Gastrocnemius medialis (tissue), 4 donors: ENCODE measurements at regions of chr13 and their contacts with region 1.

Region 1: GRCh38 chr13:110715395-110716235 is 2.1 kb downstream of the ING1 start:
- DNase-seq: peak; percentile 99
- ATAC-seq: peak; percentile 65 to 72
- H3K4me3 ChIP-seq: peak overlapping the region; percentile 85 to 98 (median 94)
- H3K27ac ChIP-seq: peak overlapping the region; percentile 97 to 100 (median 100)
- H3K4me1 ChIP-seq: peaks cover 25 to 30% of the 10 kb centered on the region in 2 donors
- H3K27me3 ChIP-seq: no peaks in the 10 kb centered on the region
- CTCF ChIP-seq: peak in 3 of 5 experiments; percentile 5 to 33 (median 30)
- POLR2A ChIP-seq: peak; percentile 76

Region 2: GRCh38 chr13:109918179-109918711 is 797.4 kb before region 1 on chr13:
- in situ Hi-C with region 1: no loop called
- intact Hi-C with region 1: no loop called
- DNase-seq: peak; percentile 84 to 92
- ATAC-seq: peak; percentile 99
- H3K4me3 ChIP-seq: no peak overlapping the region
- H3K27ac ChIP-seq: peak overlapping the region; percentile 73 to 81 (median 77)
- H3K4me1 ChIP-seq: peaks cover 4 to 11% of the 10 kb centered on the region in 2 donors
- H3K27me3 ChIP-seq: no peaks in the 10 kb centered on the region
- CTCF ChIP-seq: peak in 1 of 5 experiments; percentile 14
- POLR2A ChIP-seq: peak in 1 of 2 donors; percentile 21

Region 3: GRCh38 chr13:110138010-110138699 is 577.5 kb before region 1 on chr13:
- in situ Hi-C with region 1: no loop called
- intact Hi-C with region 1: loop called (anchors 2 kb)
- DNase-seq: peak; percentile 72 to 75
- ATAC-seq: peak; percentile 67 to 68
- H3K4me3 ChIP-seq: peak overlapping the region; percentile 53 to 81 (median 60)
- H3K27ac ChIP-seq: peak overlapping the region; percentile 85 to 95 (median 89)
- H3K4me1 ChIP-seq: peaks cover 41 to 43% of the 10 kb centered on the region in 2 donors
- H3K27me3 ChIP-seq: no peaks in the 10 kb centered on the region
- CTCF ChIP-seq: peak in 2 of 5 experiments; percentile 14 to 17
- POLR2A ChIP-seq: peak; percentile 55 to 65

Region 4: GRCh38 chr13:110455941-110456340 is 259.7 kb before region 1 on chr13:
- in situ Hi-C with region 1: no loop called
- intact Hi-C with region 1: no loop called
- DNase-seq: peak; percentile 54 to 74
- ATAC-seq: peak; percentile 82 to 96
- H3K4me3 ChIP-seq: peak overlapping the region in 1 of 4 donors; percentile 27
- H3K27ac ChIP-seq: no peak overlapping the region
- H3K4me1 ChIP-seq: no peaks in the 10 kb centered on the region
- H3K27me3 ChIP-seq: no peaks in the 10 kb centered on the region
- CTCF ChIP-seq: peak; percentile 69 to 82 (median 74)
- POLR2A ChIP-seq: no peak

Region 5: GRCh38 chr13:110499621-110500281 is 215.9 kb before region 1 on chr13:
- in situ Hi-C with region 1: no loop called
- intact Hi-C with region 1: loop called (anchors 2 kb)
- DNase-seq: no peak
- ATAC-seq: no peak
- H3K4me3 ChIP-seq: no peak overlapping the region
- H3K27ac ChIP-seq: peak overlapping the region in 2 of 4 donors; percentile 76 to 85
- H3K4me1 ChIP-seq: peaks cover 5 to 10% of the 10 kb centered on the region in 2 donors
- H3K27me3 ChIP-seq: no peaks in the 10 kb centered on the region
- CTCF ChIP-seq: no peak
- POLR2A ChIP-seq: no peak

Region 6: DNA sequence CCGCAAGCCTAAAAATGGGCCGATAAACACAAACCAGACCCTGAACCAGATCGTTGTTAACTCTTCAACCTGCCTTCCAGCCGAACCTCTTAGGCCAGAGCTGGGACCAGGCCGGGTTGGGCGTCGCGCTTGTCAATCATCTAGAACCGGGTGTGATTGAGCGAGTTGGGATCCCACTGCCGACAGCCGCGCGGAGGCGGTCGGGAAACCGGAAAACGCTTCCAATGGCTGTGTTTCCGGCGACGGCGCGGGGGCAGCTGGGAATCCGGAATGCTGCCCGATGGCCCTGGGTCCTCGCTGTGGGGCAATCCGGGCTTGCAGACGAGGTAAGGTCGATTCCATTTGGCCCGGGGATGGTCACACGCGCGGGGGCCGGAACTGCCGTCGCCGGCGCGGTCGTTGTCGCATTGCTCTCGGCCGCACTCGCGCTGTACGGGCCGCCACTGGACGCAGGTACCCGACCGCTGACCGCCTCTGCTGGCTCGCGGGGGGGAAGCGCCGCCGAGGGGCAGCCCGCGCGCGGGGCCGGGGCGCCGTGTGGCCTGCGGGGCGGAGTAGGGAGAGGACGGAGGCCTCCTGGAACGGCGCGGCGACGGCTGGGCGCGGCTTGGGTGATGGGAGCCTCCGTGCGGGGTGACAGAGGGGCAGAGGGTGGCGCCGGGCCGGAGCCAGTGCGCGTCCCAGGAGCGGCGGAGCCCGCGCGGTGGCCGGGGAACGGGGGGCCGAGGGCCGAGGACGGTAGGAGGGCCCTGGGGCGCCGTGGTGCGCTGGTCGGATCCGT is 100.1 kb before region 1 on chr13 and contains the start of gene NAXD:
- in situ Hi-C with region 1: no loop called
- intact Hi-C with region 1: loop called (anchors 2 kb)
- DNase-seq: peak; percentile 89 to 94
- ATAC-seq: peak; percentile 90 to 92
- H3K4me3 ChIP-seq: peak within 1 kb of the TSS; percentile 68 to 95 (median 81)
- H3K27ac ChIP-seq: peak within 1 kb of the TSS; percentile 80 to 93 (median 90)
- H3K4me1 ChIP-seq: peaks cover 22 to 31% of the 10 kb centered on the region in 2 donors
- H3K27me3 ChIP-seq: peaks cover 2 to 4% (median 2%) of the 10 kb centered on the region in 3 donors
- CTCF ChIP-seq: no peak
- POLR2A ChIP-seq: peak; percentile 83 to 85
- total RNA-seq, gene NAXD: 17.9 to 24.7 (median 21.5) TPM

Region 7: GRCh38 chr13:111031531-111031961 is 315.9 kb after region 1 on chr13:
- in situ Hi-C with region 1: no loop called
- intact Hi-C with region 1: loop called (anchors 5 kb)
- DNase-seq: peak; percentile 80 to 83
- ATAC-seq: peak; percentile 92 to 96
- H3K4me3 ChIP-seq: no peak overlapping the region
- H3K27ac ChIP-seq: peak overlapping the region; percentile 74 to 95 (median 82)
- H3K4me1 ChIP-seq: peaks cover 13 to 21% of the 10 kb centered on the region in 2 donors
- H3K27me3 ChIP-seq: no peaks in the 10 kb centered on the region
- CTCF ChIP-seq: no peak
- POLR2A ChIP-seq: peak; percentile 67 to 79